ENCODE measurements at regions of chr7 and their contacts with region 1.

Region 1: GRCh38 chr7:130733931-130734814 is at the start of gene KLF14:
- DNase-seq: peak; percentile 10
- H3K4me3 Mint-ChIP-seq: peak within 1 kb of the TSS; percentile 81
- H3K27ac Mint-ChIP-seq: no peak within 1 kb of the TSS
- H3K4me1 Mint-ChIP-seq: peaks cover 7% of the 10 kb centered on the region
- H3K27me3 Mint-ChIP-seq: peaks cover 73% of the 10 kb centered on the region
- total RNA-seq, gene KLF14: not detected in 2 replicates

Region 2: GRCh38 chr7:129780257-129780973 is 953.8 kb before region 1 on chr7:
- intact Hi-C with region 1: loop called (anchors 10 kb)
- DNase-seq: peak; percentile 44
- H3K4me3 Mint-ChIP-seq: peak overlapping the region; percentile 58
- H3K27ac Mint-ChIP-seq: no peak overlapping the region
- H3K4me1 Mint-ChIP-seq: peaks cover 22% of the 10 kb centered on the region
- H3K27me3 Mint-ChIP-seq: peaks cover 61% of the 10 kb centered on the region

Region 3: DNA sequence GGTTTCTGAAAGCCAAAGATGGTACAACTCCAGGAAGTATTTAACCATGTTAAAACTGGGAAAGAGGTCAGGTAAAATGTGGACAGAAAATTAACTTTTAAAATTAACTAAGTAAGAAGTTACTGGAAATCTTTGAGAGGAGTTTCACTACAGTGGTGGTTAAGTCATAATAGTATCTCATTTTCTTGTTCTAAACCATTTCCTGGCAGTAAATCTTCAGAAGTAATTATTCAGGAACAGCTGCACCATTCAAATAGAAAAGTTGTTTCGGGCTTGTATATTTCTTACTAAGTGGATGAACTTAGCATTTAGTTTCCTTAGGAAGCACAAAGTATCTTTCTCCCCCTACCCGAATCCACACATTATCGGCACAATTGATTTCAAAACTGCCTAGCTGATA is 92.7 kb before region 1 on chr7:
- intact Hi-C with region 1: no loop called
- DNase-seq: no peak
- H3K4me3 Mint-ChIP-seq: no peak overlapping the region
- H3K27ac Mint-ChIP-seq: peak overlapping the region; percentile 29
- H3K4me1 Mint-ChIP-seq: peaks cover 14% of the 10 kb centered on the region
- H3K27me3 Mint-ChIP-seq: no peaks in the 10 kb centered on the region

Region 4: GRCh38 chr7:130721486-130722280 is 12.5 kb before region 1 on chr7:
- intact Hi-C with region 1: no loop called
- DNase-seq: no peak
- H3K4me3 Mint-ChIP-seq: no peak overlapping the region
- H3K27ac Mint-ChIP-seq: no peak overlapping the region
- H3K4me1 Mint-ChIP-seq: no peaks in the 10 kb centered on the region
- H3K27me3 Mint-ChIP-seq: peaks cover 18% of the 10 kb centered on the region

Region 5: DNA sequence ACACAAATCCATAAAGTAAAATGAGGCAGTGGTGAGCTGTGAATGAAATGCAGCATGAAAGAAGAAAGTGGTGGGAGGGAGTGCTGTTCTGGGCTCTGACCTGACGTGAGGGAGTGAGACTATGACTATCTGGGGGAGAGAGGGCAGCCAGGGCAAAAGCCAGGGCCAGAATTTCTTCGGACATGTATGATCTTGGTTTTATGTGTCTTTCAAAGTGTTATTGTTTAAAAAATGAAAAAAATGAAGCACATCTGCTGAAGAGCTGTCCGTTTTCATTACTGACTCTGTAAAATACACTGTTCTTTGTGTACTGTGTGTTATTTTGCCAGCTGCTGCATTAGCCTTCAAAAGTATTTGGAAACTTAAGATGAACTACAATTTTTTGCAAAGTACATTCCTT is 70.0 kb after region 1 on chr7:
- intact Hi-C with region 1: no loop called
- DNase-seq: no peak
- H3K4me3 Mint-ChIP-seq: no peak overlapping the region
- H3K27ac Mint-ChIP-seq: no peak overlapping the region
- H3K4me1 Mint-ChIP-seq: no peaks in the 10 kb centered on the region
- H3K27me3 Mint-ChIP-seq: peaks cover 19% of the 10 kb centered on the region